ENCODE measurements at regions of chr20 and their contacts with region 1.

Region 1: DNA sequence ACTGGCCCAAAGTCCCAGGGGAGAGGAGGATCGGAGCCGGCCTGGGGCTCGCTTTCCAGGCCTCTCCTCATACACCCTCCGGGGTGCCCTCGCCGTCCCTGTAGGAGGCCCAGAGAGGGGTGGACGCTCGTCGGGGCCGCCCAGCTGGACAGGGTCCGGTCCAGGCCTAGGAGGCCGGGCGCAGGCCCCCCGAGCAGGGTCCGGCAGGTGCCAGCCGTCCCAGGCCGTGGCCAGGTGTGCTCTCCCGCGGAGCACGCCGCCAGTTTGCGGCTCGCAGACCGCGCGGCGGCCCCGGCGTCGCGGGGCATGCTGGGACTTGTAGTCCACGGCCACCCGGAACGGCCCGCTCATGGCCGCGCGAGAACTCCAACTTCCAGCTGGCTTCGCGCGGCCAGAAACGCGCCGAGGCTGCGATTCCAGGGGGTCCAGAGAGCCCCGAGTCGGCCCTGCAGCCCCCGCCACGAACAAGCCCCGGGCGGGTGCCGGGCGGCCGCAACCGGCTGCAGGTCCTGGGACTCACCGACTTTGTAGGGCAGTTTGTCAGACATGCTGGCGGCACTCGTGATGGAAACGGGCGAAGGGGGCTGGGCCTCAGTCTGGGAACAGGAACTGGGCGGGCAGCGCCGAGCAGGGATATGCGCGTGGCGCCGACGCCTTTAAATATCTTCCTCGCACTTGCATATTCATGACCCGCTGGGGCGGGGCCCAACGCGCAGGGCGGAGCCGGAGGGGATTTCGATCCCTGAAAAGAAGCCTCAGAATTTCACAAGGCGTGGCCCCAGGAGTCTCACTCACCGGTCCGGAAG is at the start of gene AHCY:
- DNase-seq: peak; percentile 98
- H3K4me3 Mint-ChIP-seq: no peak within 1 kb of the TSS
- H3K27ac Mint-ChIP-seq: peak within 1 kb of the TSS; percentile 83
- H3K4me1 Mint-ChIP-seq: no peaks in the 10 kb centered on the region
- H3K27me3 Mint-ChIP-seq: no peaks in the 10 kb centered on the region
- CTCF ChIP-seq: no peak
- total RNA-seq, gene AHCY: 101 and 175 TPM in 2 replicates

Region 2: GRCh38 chr20:34083137-34083536 is 219.8 kb before region 1 on chr20:
- CTCF ChIA-PET with region 1: no interaction called
- POLR2A ChIA-PET with region 1: no interaction called
- intact Hi-C with region 1: no loop called
- DNase-seq: peak; percentile 96
- H3K4me3 Mint-ChIP-seq: no peak overlapping the region
- H3K27ac Mint-ChIP-seq: peak overlapping the region; percentile 82
- H3K4me1 Mint-ChIP-seq: peaks cover 24% of the 10 kb centered on the region
- H3K27me3 Mint-ChIP-seq: no peaks in the 10 kb centered on the region
- CTCF ChIP-seq: no peak

Region 3: DNA sequence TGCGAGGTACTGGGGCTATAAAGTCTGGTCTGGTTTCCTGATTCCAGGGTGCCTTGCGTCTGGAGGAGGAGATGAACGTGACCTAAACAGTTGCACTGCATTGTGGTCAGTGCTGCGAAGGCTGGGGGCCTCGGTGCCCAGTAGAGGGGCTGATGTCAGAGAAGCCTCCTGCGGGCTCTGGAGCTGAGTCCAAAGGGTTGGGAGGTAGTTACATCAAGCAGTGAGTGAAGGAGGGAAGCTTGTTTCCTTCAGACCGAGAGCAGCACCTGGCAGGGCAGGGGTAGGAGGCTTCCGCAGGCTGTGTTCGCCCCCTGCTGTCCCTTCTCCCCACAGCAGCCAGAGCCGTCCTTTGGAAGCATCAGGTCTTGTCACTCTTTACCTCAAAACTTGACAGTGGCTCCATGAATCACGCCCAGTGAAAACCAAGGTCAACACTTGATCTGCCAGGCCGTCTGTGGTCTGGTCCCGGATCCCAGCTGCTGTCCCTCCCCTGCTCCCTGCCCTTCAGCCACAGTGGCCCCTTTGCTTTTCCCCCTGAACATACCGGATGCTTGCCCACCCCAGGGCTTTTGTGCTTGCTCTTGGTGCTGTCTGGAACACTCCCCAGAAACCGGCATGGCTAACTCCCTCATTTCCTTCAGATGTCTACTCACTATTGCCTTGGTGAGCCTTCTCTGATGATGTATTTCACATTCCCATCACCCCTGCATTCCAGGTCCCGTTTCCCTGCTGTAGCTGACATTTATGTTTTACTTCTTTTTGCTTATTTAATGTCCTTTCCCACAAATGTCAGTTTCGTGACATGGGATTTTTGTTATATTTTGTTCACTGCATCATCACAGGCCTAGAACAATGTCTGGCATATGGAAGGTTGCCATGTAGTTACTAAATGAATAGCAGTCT is 220.3 kb after region 1 on chr20:
- CTCF ChIA-PET with region 1: no interaction called
- POLR2A ChIA-PET with region 1: interaction called, 10 read pairs
- intact Hi-C with region 1: no loop called
- DNase-seq: peak; percentile 40
- H3K4me3 Mint-ChIP-seq: no peak overlapping the region
- H3K27ac Mint-ChIP-seq: peak overlapping the region; percentile 97
- H3K4me1 Mint-ChIP-seq: peaks cover 33% of the 10 kb centered on the region
- H3K27me3 Mint-ChIP-seq: no peaks in the 10 kb centered on the region
- CTCF ChIP-seq: peak; percentile 31